ENCODE measurements at regions of chr1 and their contacts with region 1.

Region 1: DNA sequence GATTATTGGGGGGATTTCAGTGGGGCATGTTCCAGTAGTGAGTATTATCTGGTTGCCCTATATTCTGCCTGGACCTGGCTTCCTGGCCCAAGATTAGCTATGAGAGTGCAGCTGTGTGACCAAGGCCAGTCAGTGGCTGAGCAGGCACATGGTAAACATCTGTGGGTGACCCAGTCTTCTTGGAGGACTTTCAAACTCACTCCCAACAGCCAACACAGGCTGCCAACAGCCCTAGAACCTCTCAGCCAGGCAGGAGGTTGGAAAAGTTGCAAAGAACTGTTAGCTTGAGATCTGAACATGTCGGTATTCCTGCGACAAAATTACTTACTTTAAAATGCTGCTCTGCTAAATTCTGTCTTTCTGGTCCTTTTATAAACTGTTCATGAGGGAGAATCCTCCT is 192.4 kb downstream of the TGFBR3 start:
- DNase-seq: no peak
- ATAC-seq: no peak
- H3K4me3 ChIP-seq: no peak overlapping the region
- H3K27ac ChIP-seq: no peak overlapping the region
- H3K4me1 ChIP-seq: peaks cover 3 to 8% of the 10 kb centered on the region in 2 experiments; a peak in 4 of 5 replicates
- H3K27me3 ChIP-seq: no peaks in the 10 kb centered on the region
- CTCF ChIP-seq: no peak
- EP300 ChIP-seq: no peak
- POLR2A ChIP-seq: no peak
- RAD21 ChIP-seq: no peak

Region 2: DNA sequence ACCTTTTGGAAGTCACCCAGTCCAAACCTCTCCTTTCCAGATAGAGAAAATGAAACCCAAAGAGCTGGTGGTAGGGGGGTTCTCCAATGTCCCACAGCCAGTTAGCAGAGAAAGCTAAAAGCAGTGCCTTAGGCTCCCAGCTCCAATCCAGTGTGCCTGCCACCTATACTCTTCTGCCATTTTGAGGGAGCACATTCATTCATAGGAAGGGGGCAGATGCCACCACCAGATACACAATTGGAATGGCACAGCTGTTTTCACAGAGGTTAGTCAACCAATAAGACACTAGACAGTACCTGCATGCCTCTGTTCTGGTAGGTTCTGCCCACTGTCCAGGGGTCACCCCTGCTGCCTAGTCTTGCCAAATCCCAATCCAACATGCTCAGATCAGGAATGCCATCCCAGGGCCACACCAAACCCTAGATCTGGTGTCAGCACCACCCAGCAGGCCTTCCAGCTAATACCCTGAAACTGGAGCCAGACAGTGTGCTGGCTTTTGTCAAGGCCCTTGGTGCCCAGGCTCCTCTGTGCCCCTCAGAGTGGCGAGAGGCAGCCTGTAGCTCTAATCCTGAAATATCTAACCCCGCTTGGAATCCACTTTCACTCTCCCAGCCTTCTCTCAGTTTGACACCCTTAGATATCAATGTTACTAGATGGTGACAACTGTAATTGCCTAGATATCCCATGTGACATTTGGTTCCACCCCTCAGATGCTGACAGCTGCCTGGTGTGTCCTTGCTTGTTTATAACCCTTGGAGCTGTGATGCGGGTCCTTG is 13.7 kb after region 1 on chr1:
- CTCF ChIA-PET with region 1: no interaction called
- POLR2A ChIA-PET with region 1: interaction called, 10 read pairs
- in situ Hi-C with region 1: no loop called
- intact Hi-C with region 1: no loop called
- DNase-seq: peak in 1 of 4 experiments; percentile 47
- ATAC-seq: peak; percentile 6
- H3K4me3 ChIP-seq: no peak overlapping the region
- H3K27ac ChIP-seq: peak overlapping the region; percentile 95
- H3K4me1 ChIP-seq: peaks cover 17 to 54% of the 10 kb centered on the region in 2 experiments; a peak in 4 of 5 replicates
- H3K27me3 ChIP-seq: no peaks in the 10 kb centered on the region
- CTCF ChIP-seq: no peak
- EP300 ChIP-seq: no peak
- POLR2A ChIP-seq: no peak
- RAD21 ChIP-seq: no peak